CD8-positive, alpha-beta T cell (primary cell): ENCODE measurements at regions of chr10 and their contacts with region 1.

Region 1: DNA sequence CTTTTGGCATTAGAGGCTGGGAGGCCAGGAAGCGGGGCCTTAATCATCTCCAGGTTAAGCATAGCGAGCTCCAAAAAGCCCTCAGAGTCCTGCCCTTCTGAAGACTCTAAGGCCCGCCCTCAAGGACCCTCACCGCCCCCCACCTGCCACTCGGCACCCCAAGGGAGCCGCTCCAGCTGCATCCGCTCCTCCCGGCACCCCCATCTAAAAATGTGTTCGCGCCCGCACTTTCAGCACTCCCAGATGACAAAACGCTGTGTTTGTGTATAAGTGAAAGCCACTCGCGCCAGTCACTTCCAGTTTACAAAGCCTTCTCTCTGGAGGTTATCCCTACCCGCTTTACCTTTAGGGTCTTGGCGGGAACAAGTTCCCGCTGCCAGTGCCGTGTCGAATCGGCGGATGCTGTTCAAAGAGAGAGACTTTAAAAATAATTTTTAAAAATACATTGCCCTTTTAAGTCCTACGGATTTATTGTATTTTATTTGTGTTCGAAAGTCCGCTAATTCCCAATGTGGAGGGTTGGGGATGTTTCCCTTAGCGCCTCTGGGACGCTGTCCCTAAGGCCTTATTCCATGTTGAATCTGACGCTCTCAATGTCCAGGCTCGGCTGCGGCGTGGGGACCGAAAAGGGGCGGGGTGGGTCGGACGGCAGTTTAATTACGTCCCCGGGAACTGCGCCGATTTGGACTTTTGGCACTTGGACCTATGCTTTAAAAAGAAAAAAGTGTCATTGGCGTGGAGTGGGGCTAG is at the starts of genes DCLRE1A and NHLRC2:
- DNase-seq: peak; percentile 39 to 80 (median 64)
- ATAC-seq: peak; percentile 43
- H3K4me3 ChIP-seq: peak within 1 kb of the TSS; percentile 76 to 84
- H3K4me3 Mint-ChIP-seq: peak within 1 kb of the TSS; percentile 95
- H3K27ac ChIP-seq: peak within 1 kb of the TSS; percentile 73 to 83
- H3K27ac Mint-ChIP-seq: peak within 1 kb of the TSS; percentile 93
- H3K4me1 ChIP-seq: peaks cover 30% of the 10 kb centered on the region
- H3K4me1 Mint-ChIP-seq: peaks cover 63% of the 10 kb centered on the region
- H3K27me3 ChIP-seq: no peaks in the 10 kb centered on the region
- H3K27me3 Mint-ChIP-seq: no peaks in the 10 kb centered on the region
- CTCF ChIP-seq: no peak
- total RNA-seq, gene DCLRE1A: 0.49 to 0.89 TPM
- total RNA-seq, gene NHLRC2: 6.3 to 7.0 TPM

Region 2: GRCh38 chr10:112183329-112184051 is 1670.7 kb before region 1 on chr10 and contains the start of gene GPAM:
- CTCF ChIA-PET with region 1: no interaction called
- POLR2A ChIA-PET with region 1: no interaction called
- intact Hi-C with region 1: loop called in 1 of 2 experiments (anchors 10 kb)
- DNase-seq: peak; percentile 95 to 100 (median 99)
- ATAC-seq: peak; percentile 98
- H3K4me3 ChIP-seq: peak within 1 kb of the TSS; percentile 65 to 92
- H3K4me3 Mint-ChIP-seq: peak within 1 kb of the TSS; percentile 87
- H3K27ac ChIP-seq: peak within 1 kb of the TSS; percentile 76 to 78
- H3K27ac Mint-ChIP-seq: peak within 1 kb of the TSS; percentile 93
- H3K4me1 ChIP-seq: peaks cover 17% of the 10 kb centered on the region
- H3K4me1 Mint-ChIP-seq: peaks cover 28% of the 10 kb centered on the region
- H3K27me3 ChIP-seq: no peaks in the 10 kb centered on the region
- H3K27me3 Mint-ChIP-seq: no peaks in the 10 kb centered on the region
- CTCF ChIP-seq: no peak
- total RNA-seq, gene GPAM: 3.2 to 4.2 TPM

Region 3: DNA sequence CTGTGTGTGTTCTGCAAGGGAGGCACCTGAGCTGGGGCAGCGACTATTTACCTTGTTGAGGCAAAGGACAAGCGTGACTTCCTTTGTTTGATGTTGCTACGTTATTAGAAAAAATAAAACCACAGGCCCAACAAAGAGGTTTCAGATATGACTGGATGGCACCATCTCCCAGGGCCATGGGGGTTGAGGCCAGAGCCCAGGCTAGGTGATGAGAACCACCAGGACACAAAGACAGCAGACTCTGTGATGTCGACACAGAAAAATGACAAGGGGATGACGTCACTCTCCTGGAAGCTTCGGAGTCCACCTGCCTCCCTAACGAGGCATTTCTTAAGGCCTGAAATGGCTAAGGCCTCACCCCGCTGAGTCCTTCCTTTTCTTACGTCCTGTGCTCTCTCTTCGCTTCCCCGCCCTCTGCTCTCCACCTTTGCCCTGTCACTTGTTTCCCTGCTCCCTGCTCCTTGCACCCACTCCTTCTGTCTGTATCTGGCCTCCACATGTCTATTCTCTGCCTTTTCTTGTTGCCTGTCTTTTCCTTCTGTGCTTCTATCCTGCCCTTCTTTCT is 106.5 kb after region 1 on chr10:
- CTCF ChIA-PET with region 1: no interaction called
- POLR2A ChIA-PET with region 1: no interaction called
- intact Hi-C with region 1: loop called in 1 of 2 experiments (anchors 5 kb)
- DNase-seq: peak in 7 of 9 experiments; percentile 13 to 86 (median 56)
- ATAC-seq: peak; percentile 22
- H3K4me3 ChIP-seq: peak overlapping the region in 1 of 2 experiments; percentile 17
- H3K4me3 Mint-ChIP-seq: peak overlapping the region; percentile 46
- H3K27ac ChIP-seq: peak overlapping the region; percentile 20 to 68
- H3K27ac Mint-ChIP-seq: peak overlapping the region; percentile 83
- H3K4me1 ChIP-seq: peaks cover 36% of the 10 kb centered on the region
- H3K4me1 Mint-ChIP-seq: peaks cover 37% of the 10 kb centered on the region
- H3K27me3 ChIP-seq: no peaks in the 10 kb centered on the region
- H3K27me3 Mint-ChIP-seq: peaks cover 9% of the 10 kb centered on the region
- CTCF ChIP-seq: no peak

Region 4: GRCh38 chr10:114821293-114821914 is 967.2 kb after region 1 on chr10 and contains the start of gene FHIP2A:
- CTCF ChIA-PET with region 1: no interaction called
- POLR2A ChIA-PET with region 1: no interaction called
- intact Hi-C with region 1: loop called in 1 of 2 experiments (anchors 5 kb)
- DNase-seq: peak; percentile 73 to 91 (median 82)
- ATAC-seq: peak; percentile 93
- H3K4me3 ChIP-seq: peak within 1 kb of the TSS; percentile 70 to 75
- H3K4me3 Mint-ChIP-seq: peak within 1 kb of the TSS; percentile 95
- H3K27ac ChIP-seq: peak within 1 kb of the TSS; percentile 78 to 79
- H3K27ac Mint-ChIP-seq: peak within 1 kb of the TSS; percentile 94
- H3K4me1 ChIP-seq: peaks cover 11% of the 10 kb centered on the region
- H3K4me1 Mint-ChIP-seq: peaks cover 38% of the 10 kb centered on the region
- H3K27me3 ChIP-seq: no peaks in the 10 kb centered on the region
- H3K27me3 Mint-ChIP-seq: peaks cover 2% of the 10 kb centered on the region
- CTCF ChIP-seq: peak; percentile 35
- total RNA-seq, gene FHIP2A: 62.0 to 66.4 TPM

Region 5: DNA sequence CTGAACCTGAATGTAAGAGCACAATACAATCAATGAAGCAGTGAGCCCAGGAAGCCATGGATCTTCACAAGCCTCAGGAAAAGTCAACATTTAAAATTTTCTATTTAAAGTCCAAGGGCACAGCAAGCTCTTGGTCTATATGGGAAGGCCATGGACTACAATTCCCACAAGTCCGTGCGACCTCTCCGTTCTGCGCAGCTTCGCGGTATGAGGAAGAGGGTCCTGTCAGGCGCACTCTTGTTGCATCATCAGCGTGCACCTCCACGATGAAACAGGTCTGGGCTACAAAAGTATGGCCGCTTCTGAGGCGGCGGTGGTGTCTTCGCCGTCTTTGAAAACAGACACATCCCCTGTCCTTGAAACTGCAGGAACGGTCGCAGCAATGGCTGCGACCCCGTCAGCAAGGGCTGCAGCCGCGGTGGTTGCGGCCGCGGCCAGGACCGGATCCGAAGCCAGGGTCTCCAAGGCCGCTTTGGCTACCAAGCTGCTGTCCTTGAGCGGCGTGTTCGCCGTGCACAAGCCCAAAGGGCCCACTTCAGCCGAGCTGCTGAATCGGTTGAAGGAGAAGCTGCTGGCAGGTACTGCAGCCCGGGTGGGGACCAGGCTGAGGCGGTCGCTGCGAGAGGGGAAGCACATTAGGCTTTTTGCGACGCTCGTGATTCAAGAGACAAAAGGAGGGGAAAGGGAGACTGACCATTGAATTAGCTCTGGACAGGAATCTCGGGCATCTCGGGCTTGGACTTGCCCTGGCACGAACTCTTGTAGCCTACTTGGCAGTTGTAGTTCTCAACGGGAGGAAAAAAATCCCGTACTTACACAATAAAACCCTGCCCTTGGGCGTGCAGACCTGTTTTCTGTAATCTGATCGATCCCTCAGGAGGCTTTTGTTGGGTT is 1084.0 kb after region 1 on chr10 and contains the start of gene TRUB1:
- CTCF ChIA-PET with region 1: no interaction called
- POLR2A ChIA-PET with region 1: no interaction called
- intact Hi-C with region 1: loop called (anchors 5 to 10 kb)
- DNase-seq: peak; percentile 75 to 97 (median 90)
- ATAC-seq: peak; percentile 100
- H3K4me3 ChIP-seq: peak within 1 kb of the TSS; percentile 85 to 88
- H3K4me3 Mint-ChIP-seq: peak within 1 kb of the TSS; percentile 96
- H3K27ac ChIP-seq: peak within 1 kb of the TSS; percentile 73 to 91
- H3K27ac Mint-ChIP-seq: peak within 1 kb of the TSS; percentile 97
- H3K4me1 ChIP-seq: peaks cover 15% of the 10 kb centered on the region
- H3K4me1 Mint-ChIP-seq: peaks cover 37% of the 10 kb centered on the region
- H3K27me3 ChIP-seq: no peaks in the 10 kb centered on the region
- H3K27me3 Mint-ChIP-seq: no peaks in the 10 kb centered on the region
- CTCF ChIP-seq: no peak
- total RNA-seq, gene TRUB1: 7.7 to 9.7 TPM